Activated CD8-positive, alpha-beta memory T cell treated with anti-CD3 and anti-CD28 coated beads, Interleukin-2, amount 10 ng/mL, durations not matched to agents 7 days and 5 days (primary cell): ENCODE measurements at regions of chr3 and their contacts with region 1.

Region 1: GRCh38 chr3:137013955-137014688 is 56.3 kb downstream of the IL20RB start:
- DNase-seq: peak; percentile 86
- ATAC-seq: peak; percentile 94
- H3K4me3 Mint-ChIP-seq: peak overlapping the region; percentile 67
- H3K27ac Mint-ChIP-seq: no peak overlapping the region
- H3K4me1 Mint-ChIP-seq: peaks cover 11% of the 10 kb centered on the region
- H3K27me3 Mint-ChIP-seq: no peaks in the 10 kb centered on the region

Region 2: GRCh38 chr3:136075218-136075808 is 938.8 kb before region 1 on chr3:
- CTCF ChIA-PET with region 1: interaction called, 21 read pairs
- DNase-seq: peak; percentile 81
- ATAC-seq: peak; percentile 74
- H3K4me3 Mint-ChIP-seq: no peak overlapping the region
- H3K27ac Mint-ChIP-seq: no peak overlapping the region
- H3K4me1 Mint-ChIP-seq: peaks cover 8% of the 10 kb centered on the region
- H3K27me3 Mint-ChIP-seq: peaks cover 7% of the 10 kb centered on the region

Region 3: DNA sequence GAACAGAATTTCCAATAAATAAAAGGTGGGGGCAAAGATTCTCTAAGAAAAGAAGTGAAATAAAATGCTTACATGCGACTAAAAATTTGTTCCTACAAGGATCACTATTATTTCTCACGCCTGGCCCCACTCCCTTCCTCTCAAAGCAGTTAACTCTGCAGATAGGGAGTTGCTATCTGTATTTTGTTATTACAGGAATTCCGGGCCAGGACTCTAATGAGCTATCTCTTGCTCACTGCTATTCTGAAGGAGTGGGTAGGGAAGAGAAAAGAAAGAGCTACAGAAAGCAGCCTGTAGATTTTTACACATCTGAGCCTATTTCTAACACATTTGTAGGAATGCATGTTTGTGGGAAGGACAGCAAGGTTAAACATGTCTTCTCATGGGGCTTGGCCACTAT is 623.5 kb before region 1 on chr3:
- CTCF ChIA-PET with region 1: interaction called, 10 read pairs
- DNase-seq: no peak
- ATAC-seq: no peak
- H3K4me3 Mint-ChIP-seq: no peak overlapping the region
- H3K27ac Mint-ChIP-seq: no peak overlapping the region
- H3K4me1 Mint-ChIP-seq: no peaks in the 10 kb centered on the region
- H3K27me3 Mint-ChIP-seq: no peaks in the 10 kb centered on the region

Region 4: GRCh38 chr3:136787349-136787748 is 226.8 kb before region 1 on chr3:
- CTCF ChIA-PET with region 1: interaction called, 14 read pairs
- DNase-seq: peak; percentile 69
- ATAC-seq: peak; percentile 94
- H3K4me3 Mint-ChIP-seq: no peak overlapping the region
- H3K27ac Mint-ChIP-seq: peak overlapping the region; percentile 74
- H3K4me1 Mint-ChIP-seq: peaks cover 15% of the 10 kb centered on the region
- H3K27me3 Mint-ChIP-seq: no peaks in the 10 kb centered on the region

Region 5: DNA sequence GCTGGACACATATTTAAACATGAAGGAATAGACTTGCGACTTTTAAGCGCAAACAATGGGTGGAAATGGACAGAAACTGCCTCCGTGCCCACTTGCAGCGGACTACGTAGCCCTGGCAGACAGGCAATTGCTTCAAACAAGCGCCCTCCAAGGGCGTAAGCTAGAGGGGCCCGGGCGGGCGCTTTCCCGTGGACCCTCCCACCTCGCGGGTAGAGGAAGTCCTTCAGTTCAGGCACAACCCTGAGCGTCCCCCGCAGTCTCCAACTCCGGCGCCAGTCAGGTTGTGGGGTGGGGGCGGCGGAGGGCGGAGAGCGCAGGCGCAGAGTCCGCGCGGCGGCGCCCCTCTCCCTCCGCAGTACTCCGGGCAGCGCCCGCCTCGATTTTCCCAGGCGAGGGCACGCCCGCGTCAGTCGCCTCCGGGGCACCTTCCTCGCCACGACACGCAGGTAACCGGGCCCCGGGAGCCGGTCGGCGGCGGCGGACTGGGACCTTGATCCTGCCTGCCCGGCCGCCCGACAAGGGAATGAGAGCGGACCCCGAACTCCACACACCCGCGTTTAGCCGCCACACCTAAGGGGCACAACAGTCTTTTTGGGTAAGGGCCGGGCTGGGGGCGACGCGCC is 195.2 kb before region 1 on chr3 and contains the start of gene SLC35G2:
- CTCF ChIA-PET with region 1: interaction called, 16 read pairs
- DNase-seq: peak; percentile 60
- ATAC-seq: peak; percentile 70
- H3K4me3 Mint-ChIP-seq: peak within 1 kb of the TSS; percentile 81
- H3K27ac Mint-ChIP-seq: peak within 1 kb of the TSS; percentile 75
- H3K4me1 Mint-ChIP-seq: peaks cover 19% of the 10 kb centered on the region
- H3K27me3 Mint-ChIP-seq: peaks cover 47% of the 10 kb centered on the region
- total RNA-seq, gene SLC35G2: 1.1 to 1.6 TPM

Region 6: DNA sequence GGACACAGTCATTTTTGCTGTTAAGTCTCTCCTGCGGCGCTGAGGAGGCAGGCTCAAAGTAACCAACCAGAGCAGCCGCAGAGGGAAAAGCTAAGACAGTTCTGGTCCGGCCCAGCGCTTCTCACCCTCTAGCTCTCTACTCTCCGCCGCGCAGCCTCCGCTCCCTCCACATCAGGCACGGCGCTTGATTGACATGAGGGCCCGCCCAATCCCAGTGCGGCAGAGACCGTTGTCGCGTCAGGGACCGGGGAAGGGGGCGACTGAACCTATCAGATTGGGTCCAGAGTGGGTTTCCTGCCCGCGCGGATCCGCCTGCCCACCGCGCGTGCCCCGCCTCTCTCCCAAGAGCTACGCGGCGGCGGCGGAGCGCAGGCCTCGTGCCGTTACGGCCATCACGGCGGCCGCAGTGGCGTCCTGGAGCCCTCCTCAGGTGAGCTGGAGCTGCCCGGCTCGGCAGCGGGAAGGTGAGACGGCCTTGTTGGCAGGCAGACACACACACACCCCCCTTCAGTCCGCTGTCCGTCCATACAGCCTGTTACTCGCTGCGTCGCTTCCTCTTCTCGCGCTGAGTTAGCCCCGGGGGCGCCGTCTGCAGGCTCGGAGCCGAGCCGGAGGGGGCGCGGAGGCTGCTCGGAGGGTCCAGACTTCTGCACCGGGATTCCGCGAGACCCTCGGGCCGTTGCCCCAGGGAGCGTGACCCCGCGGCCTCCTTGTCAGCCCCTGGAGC is 152.1 kb before region 1 on chr3 and contains the start of gene NCK1:
- CTCF ChIA-PET with region 1: interaction called, 16 read pairs
- DNase-seq: peak; percentile 99
- ATAC-seq: peak; percentile 98
- H3K4me3 Mint-ChIP-seq: peak within 1 kb of the TSS; percentile 97
- H3K27ac Mint-ChIP-seq: peak within 1 kb of the TSS; percentile 90
- H3K4me1 Mint-ChIP-seq: peaks cover 45% of the 10 kb centered on the region
- H3K27me3 Mint-ChIP-seq: no peaks in the 10 kb centered on the region
- total RNA-seq, gene NCK1: 37.1 to 37.4 TPM

Region 7: GRCh38 chr3:137032465-137033120 is 18.5 kb after region 1 on chr3:
- CTCF ChIA-PET with region 1: interaction called, 20 read pairs
- DNase-seq: peak; percentile 86
- ATAC-seq: peak; percentile 91
- H3K4me3 Mint-ChIP-seq: peak overlapping the region; percentile 47
- H3K27ac Mint-ChIP-seq: no peak overlapping the region
- H3K4me1 Mint-ChIP-seq: peaks cover 8% of the 10 kb centered on the region
- H3K27me3 Mint-ChIP-seq: peaks cover 37% of the 10 kb centered on the region